Spleen (tissue), 13 donors: ENCODE measurements at regions of chr4 and their contacts with region 1.

Region 1: GRCh38 chr4:6716018-6716911 is at the start of gene BLOC1S4:
- DNase-seq: peak; percentile 96
- H3K4me3 ChIP-seq: peak within 1 kb of the TSS; percentile 38 to 96 (median 76)
- H3K27ac ChIP-seq: peak within 1 kb of the TSS; percentile 82 to 99 (median 97)
- H3K4me1 ChIP-seq: peaks cover 17 to 55% (median 39%) of the 10 kb centered on the region in 6 donors
- H3K27me3 ChIP-seq: no peaks in the 10 kb centered on the region
- CTCF ChIP-seq: peak in 7 of 11 experiments; percentile 19 to 43 (median 28)
- POLR2A ChIP-seq: peak; percentile 61 to 83 (median 66)
- total RNA-seq, gene BLOC1S4: 13.4 to 24.2 (median 16.7) TPM

Region 2: DNA sequence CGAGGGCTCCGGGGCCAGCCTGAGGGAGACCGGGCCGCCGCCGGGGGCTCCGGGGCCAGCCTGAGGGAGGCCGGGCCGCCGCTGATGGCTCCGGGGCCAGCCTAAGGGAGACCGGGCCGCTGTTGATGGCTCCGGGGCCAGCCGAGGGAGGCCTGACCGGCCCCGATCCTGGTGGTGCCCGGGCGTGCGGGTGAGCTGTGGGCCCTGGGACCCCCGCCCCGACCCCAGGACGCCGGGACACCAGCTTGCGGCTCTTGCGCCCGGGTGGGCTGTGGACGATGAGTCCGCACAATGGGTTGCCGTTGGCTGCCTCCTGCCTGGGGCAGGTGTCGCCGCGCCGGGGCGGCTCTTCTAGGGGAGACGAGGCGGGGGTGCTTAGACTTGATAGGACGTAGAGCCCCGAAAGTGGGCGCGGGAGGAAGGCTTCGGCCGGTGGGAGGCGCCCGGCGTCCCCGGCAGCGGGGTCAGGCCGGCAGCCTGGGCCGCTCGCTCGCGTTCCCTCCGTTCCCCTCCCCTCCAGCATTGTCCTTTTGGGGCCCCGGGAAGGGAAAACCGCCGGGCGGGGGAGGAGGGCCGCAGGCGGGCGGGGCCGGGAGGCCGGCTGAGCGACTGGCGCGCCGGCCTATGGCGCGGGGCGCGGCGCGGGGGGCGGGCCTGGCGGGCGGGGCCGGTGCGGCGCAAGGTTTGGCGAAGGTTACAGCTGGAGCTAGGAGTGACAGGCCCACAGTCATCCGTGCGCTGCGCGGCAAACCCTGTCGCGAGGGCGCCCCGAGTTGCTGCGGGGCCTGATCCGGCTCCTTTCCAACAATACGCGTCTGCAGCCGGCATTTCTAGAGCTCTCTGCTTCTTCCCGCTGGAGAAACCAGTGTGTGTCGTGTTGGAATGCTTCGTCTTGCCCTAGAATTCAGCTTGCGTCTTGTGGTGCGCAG is 67.1 kb after region 1 on chr4:
- intact Hi-C with region 1: loop called (anchors 5 kb)
- DNase-seq: peak; percentile 97
- H3K4me3 ChIP-seq: peak overlapping the region; percentile 66 to 95 (median 91)
- H3K27ac ChIP-seq: peak overlapping the region; percentile 94 to 100 (median 99)
- H3K4me1 ChIP-seq: peaks cover 17 to 69% (median 51%) of the 10 kb centered on the region in 6 donors
- H3K27me3 ChIP-seq: no peaks in the 10 kb centered on the region
- CTCF ChIP-seq: peak in 4 of 11 experiments; percentile 10 to 35 (median 23)
- POLR2A ChIP-seq: peak in 1 of 3 donors; percentile 72

Region 3: GRCh38 chr4:6873792-6874461 is 157.7 kb after region 1 on chr4:
- intact Hi-C with region 1: loop called (anchors 5 kb)
- DNase-seq: peak; percentile 93
- H3K4me3 ChIP-seq: no peak overlapping the region
- H3K27ac ChIP-seq: peak overlapping the region in 2 of 8 donors; percentile 74 to 76
- H3K4me1 ChIP-seq: peaks cover 13 to 64% (median 31%) of the 10 kb centered on the region in 6 donors
- H3K27me3 ChIP-seq: no peaks in the 10 kb centered on the region
- CTCF ChIP-seq: peak; percentile 60 to 93 (median 86)
- POLR2A ChIP-seq: no peak

Region 4: GRCh38 chr4:7070729-7071511 is 354.7 kb after region 1 on chr4:
- intact Hi-C with region 1: loop called (anchors 5 kb)
- DNase-seq: peak; percentile 95
- H3K4me3 ChIP-seq: no peak overlapping the region
- H3K27ac ChIP-seq: no peak overlapping the region
- H3K4me1 ChIP-seq: peaks cover 16 to 44% (median 35%) of the 10 kb centered on the region in 6 donors
- H3K27me3 ChIP-seq: peaks cover 0 to 9% (median 0%) of the 10 kb centered on the region in 7 donors
- CTCF ChIP-seq: peak; percentile 98 to 99 (median 99)
- POLR2A ChIP-seq: no peak